ENCODE measurements at regions of chr11 and their contacts with region 1.

Region 1: DNA sequence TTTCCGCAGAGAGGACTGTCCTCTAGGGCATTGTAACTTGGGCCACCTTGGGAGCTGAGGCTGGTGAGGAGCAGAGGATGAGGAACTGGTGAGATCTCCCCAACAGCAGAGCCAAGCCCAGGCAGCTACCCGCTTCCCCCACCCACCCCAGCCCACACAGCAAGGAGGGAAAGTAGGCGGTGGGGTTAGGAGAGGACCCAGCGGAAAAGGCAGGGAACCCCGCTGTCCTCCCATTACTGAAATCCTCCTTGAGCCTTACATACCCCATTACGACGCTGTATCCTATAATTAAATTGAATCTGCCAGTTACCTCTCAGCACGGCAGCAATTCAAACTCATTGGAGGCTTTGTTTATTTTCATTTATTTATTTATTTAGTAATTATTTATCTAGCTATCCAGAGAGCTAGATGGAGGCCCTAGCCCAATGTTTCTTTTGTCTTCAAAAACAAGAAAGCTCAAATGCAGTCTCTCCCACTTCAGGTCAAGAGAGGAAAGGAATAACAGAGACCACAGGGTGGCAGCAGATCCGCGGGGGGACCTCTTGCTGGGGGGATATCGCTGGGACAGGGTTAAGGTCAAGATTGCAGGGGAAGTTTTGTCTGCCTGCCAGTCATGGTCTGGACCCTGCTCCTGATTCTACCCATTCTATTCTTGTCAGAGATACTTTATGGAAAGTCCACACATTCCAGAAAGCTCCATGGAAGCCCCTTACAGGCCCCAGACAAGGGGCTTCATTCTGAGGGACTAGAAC is 218.0 kb downstream of the ST3GAL4 start:
- DNase-seq: no peak
- H3K4me3 ChIP-seq: no peak overlapping the region
- H3K27ac ChIP-seq: no peak overlapping the region
- H3K4me1 ChIP-seq: peaks cover 0 to 5% (median 2%) of the 10 kb centered on the region in 4 experiments; a peak in 3 of 7 replicates
- H3K27me3 ChIP-seq: no peaks in the 10 kb centered on the region
- CTCF ChIP-seq: peak; percentile 51 to 66 (median 65)
- EP300 ChIP-seq: no peak
- POLR2A ChIP-seq: no peak
- RAD21 ChIP-seq: peak; percentile 78 to 86

Region 2: DNA sequence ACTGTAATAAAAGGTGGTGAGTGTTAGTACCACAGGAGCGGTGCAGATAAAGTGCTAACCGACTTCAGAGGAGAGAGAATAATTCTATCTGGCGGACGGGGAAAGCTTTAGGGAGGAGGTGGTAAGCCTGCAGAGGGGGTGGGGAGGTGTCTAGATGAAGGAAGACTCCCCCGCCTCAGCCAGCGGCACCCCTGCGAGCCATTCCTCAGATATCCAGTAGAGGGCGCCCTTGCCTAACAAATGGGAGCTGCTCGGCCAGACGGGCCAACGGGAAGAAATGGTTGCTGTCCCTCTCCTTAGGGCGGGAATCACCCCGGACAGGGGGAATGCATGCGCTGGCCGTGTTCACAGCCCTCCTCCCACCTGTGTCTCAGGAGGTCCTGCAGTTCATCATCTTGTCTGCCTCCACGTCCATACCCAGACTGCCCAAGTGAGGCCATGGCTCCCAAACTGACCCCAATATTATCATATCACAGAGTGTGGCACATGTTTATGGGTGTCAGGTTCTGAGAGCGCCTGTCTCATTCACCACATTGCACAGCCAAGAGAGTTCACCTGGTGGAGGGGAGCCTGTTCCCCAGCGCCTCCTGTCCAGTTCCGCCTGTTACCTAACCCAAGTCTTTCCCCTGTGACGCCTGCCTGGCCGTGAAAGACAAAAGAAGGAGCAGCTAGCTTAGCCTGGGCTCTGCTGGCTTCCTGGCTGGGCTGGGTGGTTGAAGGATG is 132.5 kb before region 1 on chr11:
- CTCF ChIA-PET with region 1: interaction called, 14 read pairs
- POLR2A ChIA-PET with region 1: no interaction called
- DNase-seq: peak; percentile 64 to 98
- H3K4me3 ChIP-seq: peak overlapping the region in 1 of 4 experiments; percentile 13; a peak in 1 of 8 replicates
- H3K27ac ChIP-seq: no peak overlapping the region
- H3K4me1 ChIP-seq: peaks cover 4 to 11% (median 8%) of the 10 kb centered on the region in 4 experiments; a peak in 5 of 7 replicates
- H3K27me3 ChIP-seq: no peaks in the 10 kb centered on the region
- CTCF ChIP-seq: peak; percentile 91 to 96 (median 93)
- EP300 ChIP-seq: no peak
- POLR2A ChIP-seq: no peak
- RAD21 ChIP-seq: peak; percentile 100

Region 3: DNA sequence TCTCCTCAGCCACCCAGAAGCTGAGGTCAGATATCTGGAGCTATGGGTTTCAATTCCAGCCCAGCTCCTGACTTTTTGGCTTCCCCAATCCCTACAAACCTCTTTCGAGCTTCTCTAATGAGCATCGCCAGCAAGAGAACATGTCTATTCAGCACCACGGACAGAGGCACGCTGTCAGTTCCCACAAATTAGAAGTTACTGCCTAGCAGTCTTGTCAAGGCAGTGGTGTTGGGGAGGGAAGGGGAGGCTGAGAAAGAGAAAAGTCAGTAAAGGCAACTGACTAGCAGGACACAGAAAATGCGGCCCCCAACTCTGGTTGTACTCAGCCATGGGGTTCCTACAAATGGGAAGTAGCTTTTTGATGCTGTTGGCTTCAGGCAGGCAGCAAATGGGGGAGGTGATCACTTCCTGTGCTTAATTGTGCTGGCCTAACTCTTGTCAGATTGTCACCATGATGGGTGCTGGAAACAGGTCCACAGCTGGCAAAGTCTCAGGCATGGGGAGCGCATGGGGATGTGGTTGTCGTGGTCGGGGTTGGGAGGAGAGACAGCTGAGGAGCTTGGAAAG is 12.1 kb before region 1 on chr11:
- CTCF ChIA-PET with region 1: interaction called, 48 read pairs
- POLR2A ChIA-PET with region 1: no interaction called
- DNase-seq: peak; percentile 46 to 80
- H3K4me3 ChIP-seq: no peak overlapping the region
- H3K27ac ChIP-seq: no peak overlapping the region
- H3K4me1 ChIP-seq: peaks cover 2 to 6% (median 4%) of the 10 kb centered on the region in 4 experiments; a peak in 6 of 7 replicates
- H3K27me3 ChIP-seq: peaks cover 0 to 3% (median 0%) of the 10 kb centered on the region in 4 experiments; a peak in 3 of 7 replicates
- CTCF ChIP-seq: no peak
- EP300 ChIP-seq: no peak
- POLR2A ChIP-seq: no peak
- RAD21 ChIP-seq: peak; percentile 5 to 10; a peak in 1 of 4 replicates

Region 4: DNA sequence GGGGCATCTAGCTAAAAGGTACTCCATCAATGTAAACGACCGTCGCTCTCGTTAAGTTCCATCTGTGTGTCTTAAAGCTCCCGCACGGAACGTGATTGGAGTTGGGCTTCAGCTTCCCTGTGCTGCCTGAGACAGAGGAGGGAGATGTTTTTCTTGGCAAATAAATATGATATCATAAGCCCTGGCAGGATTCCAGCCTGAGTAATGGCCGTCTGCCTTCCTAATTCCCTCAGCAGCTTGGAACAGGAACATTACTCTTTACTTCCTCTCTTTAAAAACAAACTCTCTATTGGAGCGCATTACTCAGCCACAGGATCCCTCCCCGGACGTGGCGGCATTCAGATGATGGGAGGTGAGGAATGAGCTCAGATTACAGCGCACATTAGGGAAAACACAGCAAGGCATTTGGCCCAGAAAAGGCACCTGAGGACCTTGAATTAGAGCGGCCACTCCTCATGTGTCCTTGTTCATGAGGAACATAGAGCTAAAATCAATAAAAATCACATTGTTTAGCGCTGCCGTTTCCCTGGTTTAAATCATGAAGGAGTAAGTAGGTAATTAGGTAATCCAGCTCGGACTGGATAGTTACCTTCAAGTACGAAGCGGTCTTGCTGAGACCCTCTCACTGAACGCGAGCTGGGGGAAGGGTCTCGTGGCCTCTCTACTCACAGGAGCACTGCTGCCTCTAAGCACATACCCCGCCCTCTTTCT is 12.4 kb after region 1 on chr11:
- CTCF ChIA-PET with region 1: interaction called, 143 read pairs
- POLR2A ChIA-PET with region 1: no interaction called
- DNase-seq: no peak
- H3K4me3 ChIP-seq: peak overlapping the region in 1 of 4 experiments; percentile 32; a peak in 3 of 8 replicates
- H3K27ac ChIP-seq: peak overlapping the region; percentile 65
- H3K4me1 ChIP-seq: peaks cover 12 to 35% (median 23%) of the 10 kb centered on the region in 4 experiments
- H3K27me3 ChIP-seq: no peaks in the 10 kb centered on the region
- CTCF ChIP-seq: no peak
- EP300 ChIP-seq: no peak
- POLR2A ChIP-seq: 0 out of 3 replicates have a peak, but pooled peaks of 1 of the 2 experiments have one; percentile 19
- RAD21 ChIP-seq: no peak

Region 5: DNA sequence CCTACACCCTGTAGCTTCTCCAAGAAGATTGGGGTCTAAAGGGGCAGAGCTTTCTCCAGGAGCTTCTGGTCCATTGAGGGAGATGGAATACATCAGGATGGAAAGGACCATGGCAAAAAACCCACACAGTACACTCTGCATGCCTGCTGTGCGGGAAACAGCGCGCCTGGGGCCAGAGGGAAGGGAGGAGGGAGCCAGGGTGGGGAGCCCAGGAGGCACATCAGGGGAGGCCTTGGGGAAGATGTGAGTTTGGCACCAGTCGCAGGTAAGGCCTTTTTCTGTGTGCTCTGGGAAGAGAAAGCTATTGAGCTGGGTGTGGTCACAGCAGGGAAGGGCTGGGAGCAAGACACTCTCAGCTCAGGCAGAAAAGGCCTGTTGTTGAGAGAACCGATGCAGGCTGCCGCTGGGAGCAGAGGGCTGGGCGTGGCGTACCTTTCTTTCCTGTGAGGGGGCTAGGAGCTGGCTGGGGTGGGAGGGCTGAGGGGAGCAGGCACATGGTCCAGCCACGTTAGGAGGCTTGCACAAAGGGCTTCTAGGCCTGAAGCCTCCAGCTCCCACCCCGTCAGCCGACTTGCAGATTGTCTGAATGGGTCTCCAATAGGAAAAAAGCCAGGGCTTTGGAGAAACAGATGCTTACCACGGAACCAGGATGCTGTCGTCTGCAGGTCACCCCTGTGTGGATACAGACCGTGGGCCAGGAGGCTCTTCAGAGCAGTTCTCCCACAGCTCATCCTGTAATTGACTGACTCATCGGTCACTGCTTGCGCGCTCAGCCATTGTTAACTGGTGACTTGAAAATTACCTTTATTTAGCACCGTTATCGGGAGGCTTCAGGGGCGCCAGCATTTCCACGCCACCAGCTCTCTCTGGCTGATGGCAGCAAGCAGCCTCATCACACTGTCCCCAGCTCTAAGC is 19.3 kb after region 1 on chr11:
- CTCF ChIA-PET with region 1: interaction called, 143 read pairs
- POLR2A ChIA-PET with region 1: no interaction called
- DNase-seq: no peak
- H3K4me3 ChIP-seq: no peak overlapping the region
- H3K27ac ChIP-seq: no peak overlapping the region
- H3K4me1 ChIP-seq: peaks cover 0 to 26% (median 13%) of the 10 kb centered on the region in 4 experiments; a peak in 5 of 7 replicates
- H3K27me3 ChIP-seq: no peaks in the 10 kb centered on the region
- CTCF ChIP-seq: no peak
- EP300 ChIP-seq: no peak
- POLR2A ChIP-seq: no peak
- RAD21 ChIP-seq: no peak

Region 6: DNA sequence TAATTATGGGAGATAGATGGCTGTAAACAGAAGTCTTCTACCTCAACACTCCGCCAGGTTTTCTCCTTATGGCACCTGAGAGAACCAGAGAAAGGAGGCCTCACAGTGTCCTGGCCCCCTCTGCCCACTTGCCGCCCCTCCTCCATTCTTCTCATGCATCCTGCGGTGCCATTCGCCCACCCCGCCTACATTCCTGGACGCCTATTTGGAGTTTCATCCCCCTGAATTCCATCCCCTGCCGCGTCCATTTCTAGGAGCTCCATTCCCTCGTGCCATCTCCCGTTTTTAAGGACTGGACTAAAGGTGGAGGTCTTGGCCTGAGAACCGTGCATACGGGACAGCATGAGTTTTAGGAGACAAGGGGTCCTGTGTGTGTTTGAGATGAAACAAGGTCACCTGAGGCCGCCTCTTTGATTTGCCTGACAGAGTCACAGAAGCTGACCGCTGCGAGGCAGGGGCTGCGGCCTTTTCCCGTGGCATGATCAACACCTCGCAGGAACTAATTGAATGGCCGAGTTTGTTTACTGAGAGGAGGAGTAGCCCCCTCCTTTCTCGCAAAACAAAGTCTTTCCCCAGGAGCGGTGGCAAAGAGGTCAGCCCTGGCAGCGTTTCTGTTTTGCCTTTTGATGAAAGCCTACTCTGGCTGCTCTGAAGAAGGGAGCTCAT is 28.2 kb after region 1 on chr11:
- CTCF ChIA-PET with region 1: interaction called, 143 read pairs
- POLR2A ChIA-PET with region 1: no interaction called
- DNase-seq: no peak
- H3K4me3 ChIP-seq: peak overlapping the region in 2 of 4 experiments; percentile 16 to 32; a peak in 3 of 8 replicates
- H3K27ac ChIP-seq: no peak overlapping the region
- H3K4me1 ChIP-seq: peaks cover 7 to 13% (median 9%) of the 10 kb centered on the region in 4 experiments
- H3K27me3 ChIP-seq: no peaks in the 10 kb centered on the region; a peak in 4 of 7 replicates
- CTCF ChIP-seq: no peak
- EP300 ChIP-seq: no peak
- POLR2A ChIP-seq: no peak
- RAD21 ChIP-seq: no peak